ENCODE measurements at regions of chr19 and their contacts with region 1.

Region 1: DNA sequence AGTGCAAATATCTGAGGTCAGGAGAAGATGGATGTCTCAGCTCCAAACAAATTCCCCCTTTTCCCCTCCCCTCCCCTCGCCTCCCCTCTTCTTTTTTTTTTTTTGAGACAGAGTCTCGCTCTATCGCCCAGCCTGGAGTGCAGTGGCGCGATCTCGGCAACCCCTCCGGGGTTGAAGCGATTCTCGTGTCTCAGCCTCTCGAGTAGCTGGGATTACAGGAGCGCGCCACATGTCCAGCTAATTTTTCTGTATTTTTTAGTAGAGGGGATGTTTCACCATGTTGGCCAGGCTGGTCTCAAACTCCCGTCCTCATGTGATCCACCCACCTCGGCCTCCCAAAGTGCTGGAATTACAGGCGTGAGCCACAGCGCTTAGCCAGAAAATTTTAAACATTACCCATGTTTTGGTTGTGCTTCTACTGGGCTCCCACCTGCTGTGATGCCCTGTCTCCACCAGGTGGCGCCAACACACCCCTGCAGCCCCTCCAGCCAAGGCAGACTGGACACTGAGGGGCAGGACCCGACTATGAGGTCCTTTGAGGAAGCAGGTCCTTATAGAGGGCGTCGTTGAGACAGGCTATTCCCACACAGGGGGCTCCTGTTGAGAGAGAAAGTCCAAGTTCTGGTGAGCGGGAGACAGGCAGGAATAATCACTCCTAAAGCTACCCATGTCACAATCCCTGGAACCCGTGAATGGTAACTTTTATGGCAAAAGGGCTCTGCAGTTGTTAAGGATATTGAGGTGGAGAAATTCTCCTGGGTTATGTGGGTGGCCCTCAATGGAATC is 6.3 kb downstream of the ERICH4 start:
- DNase-seq: peak; percentile 63
- H3K4me3 Mint-ChIP-seq: peak overlapping the region; percentile 56
- H3K27ac Mint-ChIP-seq: no peak overlapping the region
- H3K4me1 Mint-ChIP-seq: peaks cover 14% of the 10 kb centered on the region
- H3K27me3 Mint-ChIP-seq: peaks cover 3% of the 10 kb centered on the region

Region 2: DNA sequence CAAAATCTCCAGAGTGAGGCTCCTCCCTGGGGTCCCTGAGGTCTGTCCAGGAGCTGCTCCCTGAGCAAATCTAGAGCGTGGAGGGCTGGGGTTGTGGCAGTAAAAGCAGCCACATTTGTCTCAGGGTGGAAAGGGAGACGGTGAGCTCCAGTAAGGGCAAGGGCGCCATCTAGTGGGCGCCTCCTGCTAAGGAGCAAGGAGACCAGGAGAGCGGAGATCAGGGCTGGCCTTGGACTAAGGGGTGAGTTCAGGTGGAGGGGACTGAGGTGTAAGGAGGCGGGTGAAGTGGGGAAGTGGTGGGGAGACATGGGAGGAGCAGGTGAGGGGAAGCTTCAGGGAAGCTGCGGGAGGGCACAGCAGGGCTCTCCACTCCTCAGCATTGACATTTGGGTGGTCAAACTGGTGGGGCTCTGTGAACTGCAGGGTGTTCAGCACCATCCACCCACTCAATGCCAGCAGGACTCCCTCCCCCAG is 121.4 kb after region 1 on chr19:
- intact Hi-C with region 1: loop called (anchors 1 kb)
- DNase-seq: peak; percentile 72
- H3K4me3 Mint-ChIP-seq: no peak overlapping the region
- H3K27ac Mint-ChIP-seq: no peak overlapping the region
- H3K4me1 Mint-ChIP-seq: peaks cover 9% of the 10 kb centered on the region
- H3K27me3 Mint-ChIP-seq: peaks cover 2% of the 10 kb centered on the region

Region 3: GRCh38 chr19:41597600-41598041 is 148.3 kb after region 1 on chr19:
- intact Hi-C with region 1: loop called (anchors 1 kb)
- DNase-seq: peak; percentile 55
- H3K4me3 Mint-ChIP-seq: no peak overlapping the region
- H3K27ac Mint-ChIP-seq: no peak overlapping the region
- H3K4me1 Mint-ChIP-seq: peaks cover 12% of the 10 kb centered on the region
- H3K27me3 Mint-ChIP-seq: peaks cover 26% of the 10 kb centered on the region